ENCODE measurements at regions of chr13 and their contacts with region 1.

Region 1: GRCh38 chr13:25659091-25659790 is 287.5 kb downstream of the ATP8A2 start:
- DNase-seq: no peak
- H3K4me3 ChIP-seq: no peak overlapping the region
- H3K27ac ChIP-seq: no peak overlapping the region
- H3K4me1 ChIP-seq: no peaks in the 10 kb centered on the region
- H3K27me3 ChIP-seq: no peaks in the 10 kb centered on the region
- CTCF ChIP-seq: no peak
- EP300 ChIP-seq: no peak
- POLR2A ChIP-seq: no peak

Region 2: GRCh38 chr13:25717666-25718197 is 58.5 kb after region 1 on chr13:
- in situ Hi-C with region 1: loop called in 1 of 4 experiments (anchors 10 kb)
- intact Hi-C with region 1: no loop called
- DNase-seq: no peak
- H3K4me3 ChIP-seq: no peak overlapping the region
- H3K27ac ChIP-seq: no peak overlapping the region
- H3K4me1 ChIP-seq: no peaks in the 10 kb centered on the region
- H3K27me3 ChIP-seq: no peaks in the 10 kb centered on the region
- CTCF ChIP-seq: no peak
- EP300 ChIP-seq: no peak
- POLR2A ChIP-seq: no peak